ENCODE measurements at regions of chr22 and their contacts with region 1.

Region 1: DNA sequence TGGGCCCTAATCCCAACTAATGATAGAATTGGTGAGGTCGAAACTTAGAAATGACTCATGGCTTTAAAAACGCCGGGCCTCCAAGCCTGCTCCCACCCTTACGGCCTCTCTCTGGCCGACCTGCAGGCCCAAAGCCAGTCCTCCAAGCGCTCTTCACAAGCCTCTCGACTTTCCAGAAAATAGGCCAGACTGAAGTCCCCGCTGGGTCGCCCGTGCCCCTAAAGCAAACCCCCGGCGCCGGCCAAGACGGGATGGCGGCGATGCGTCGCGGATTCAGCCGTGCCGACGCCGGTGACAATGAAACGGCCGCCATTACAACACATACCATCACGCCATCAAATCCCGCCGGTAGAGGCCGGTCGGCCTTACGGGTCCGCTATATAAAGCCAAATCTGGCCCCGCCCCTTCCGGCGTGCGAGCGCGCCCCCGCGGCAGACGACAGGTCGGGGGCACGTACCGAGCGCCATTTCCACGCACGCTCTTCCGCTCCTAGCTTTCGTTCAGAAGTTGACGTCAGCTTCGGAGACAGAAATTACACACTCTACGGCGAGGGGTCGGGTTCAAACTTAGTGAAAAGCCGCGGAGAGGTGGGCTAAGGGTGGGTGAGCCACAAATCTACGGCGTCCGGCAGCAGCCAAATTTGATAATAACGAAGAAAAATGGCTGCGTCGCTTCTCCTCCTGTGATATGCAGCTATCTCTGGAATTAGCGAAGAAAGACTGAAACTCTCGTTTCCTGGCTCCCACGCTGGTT is at the start of gene RPL3:
- DNase-seq: peak; percentile 92 to 99 (median 97)

Region 2: GRCh38 chr22:39013942-39014722 is 305.3 kb before region 1 on chr22 and contains the start of gene APOBEC3C:
- intact Hi-C with region 1: no loop called
- DNase-seq: peak in 39 of 42 donors; percentile 9 to 63 (median 40)

Region 3: DNA sequence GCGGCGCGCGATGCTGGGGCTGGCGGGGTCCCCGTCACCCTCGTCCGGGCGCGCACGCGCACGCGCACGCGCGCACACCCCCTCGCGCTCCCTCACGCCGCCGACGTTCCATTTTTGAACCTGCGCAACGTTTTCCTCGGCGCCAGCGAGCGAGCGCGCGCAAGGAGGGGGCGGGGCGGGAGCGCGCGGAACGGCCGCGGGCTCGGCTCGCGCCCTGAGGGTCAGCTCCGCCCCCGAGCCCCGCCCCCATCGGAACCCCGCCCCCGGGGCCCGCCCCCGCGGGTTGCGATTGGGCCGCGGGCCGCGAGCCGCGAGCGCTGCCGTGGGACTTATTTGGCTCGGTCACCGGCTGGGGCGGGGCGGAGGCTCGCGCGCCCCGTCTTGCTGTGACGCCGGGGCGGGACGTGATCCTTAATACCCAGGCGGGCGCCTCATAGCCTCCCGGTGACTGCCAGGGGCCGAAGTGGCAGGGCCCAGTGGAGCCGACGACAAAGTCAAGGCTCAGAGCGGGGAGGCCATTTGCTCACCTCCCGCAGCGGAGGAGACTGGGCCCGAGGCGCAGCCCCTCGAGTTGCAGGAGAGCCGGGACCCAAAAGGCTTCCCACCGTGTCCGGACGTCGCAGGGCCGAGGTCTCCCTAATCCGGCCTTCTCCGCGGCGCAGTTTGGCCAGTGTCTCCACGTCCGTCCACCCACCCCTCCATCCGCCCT is 166.8 kb before region 1 on chr22 and contains the start of gene CBX7:
- intact Hi-C with region 1: loop called (anchors 5 kb)
- DNase-seq: peak; percentile 91 to 97 (median 95)

Region 4: DNA sequence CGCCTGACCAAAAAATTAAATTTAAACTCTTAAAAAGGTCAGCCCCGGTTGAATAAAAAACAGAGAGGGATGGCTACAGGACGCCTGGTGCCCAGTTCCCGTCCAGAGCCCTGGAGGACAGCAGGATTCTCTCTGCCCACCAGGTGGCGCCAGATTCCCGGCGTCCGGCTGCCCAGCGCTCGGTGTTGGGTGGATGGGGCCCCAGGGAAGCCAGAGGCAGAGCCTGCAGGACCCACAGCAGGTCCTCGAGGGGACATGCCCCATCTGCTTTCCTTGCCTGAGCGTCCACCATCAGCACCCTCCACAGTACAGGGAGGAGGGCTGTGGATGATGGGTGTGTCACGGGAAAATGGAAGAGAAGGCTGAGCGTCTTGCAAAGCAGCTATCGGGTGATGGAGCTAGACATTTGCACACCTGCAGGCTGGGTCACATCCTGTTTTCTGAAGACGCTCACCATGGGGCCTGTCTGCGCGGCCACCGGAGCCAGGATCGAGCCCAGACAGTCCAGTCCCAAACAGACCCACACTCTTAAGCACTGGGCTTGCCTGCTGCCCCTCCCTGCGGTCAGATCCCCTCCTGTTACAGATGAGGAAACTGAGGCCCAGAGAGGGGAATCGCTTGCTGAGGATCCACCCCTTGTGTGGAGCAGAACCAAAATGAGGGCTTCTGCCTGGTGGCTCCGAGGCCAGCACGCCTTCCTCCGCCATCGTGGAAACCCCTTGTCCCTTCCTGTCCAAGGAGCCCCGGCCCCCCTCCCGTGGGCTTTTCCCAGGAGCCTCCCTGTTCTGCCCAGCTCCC is 148.4 kb before region 1 on chr22:
- intact Hi-C with region 1: loop called (anchors 5 kb)
- DNase-seq: peak; percentile 64 to 96 (median 89)

Region 5: GRCh38 chr22:39392341-39392948 is 73.0 kb after region 1 on chr22:
- intact Hi-C with region 1: loop called (anchors 10 kb)
- DNase-seq: no peak

Measured in head of caudate nucleus (tissue), 42 donors.